ENCODE measurements at regions of chr1 and their contacts with region 1.

Region 1: DNA sequence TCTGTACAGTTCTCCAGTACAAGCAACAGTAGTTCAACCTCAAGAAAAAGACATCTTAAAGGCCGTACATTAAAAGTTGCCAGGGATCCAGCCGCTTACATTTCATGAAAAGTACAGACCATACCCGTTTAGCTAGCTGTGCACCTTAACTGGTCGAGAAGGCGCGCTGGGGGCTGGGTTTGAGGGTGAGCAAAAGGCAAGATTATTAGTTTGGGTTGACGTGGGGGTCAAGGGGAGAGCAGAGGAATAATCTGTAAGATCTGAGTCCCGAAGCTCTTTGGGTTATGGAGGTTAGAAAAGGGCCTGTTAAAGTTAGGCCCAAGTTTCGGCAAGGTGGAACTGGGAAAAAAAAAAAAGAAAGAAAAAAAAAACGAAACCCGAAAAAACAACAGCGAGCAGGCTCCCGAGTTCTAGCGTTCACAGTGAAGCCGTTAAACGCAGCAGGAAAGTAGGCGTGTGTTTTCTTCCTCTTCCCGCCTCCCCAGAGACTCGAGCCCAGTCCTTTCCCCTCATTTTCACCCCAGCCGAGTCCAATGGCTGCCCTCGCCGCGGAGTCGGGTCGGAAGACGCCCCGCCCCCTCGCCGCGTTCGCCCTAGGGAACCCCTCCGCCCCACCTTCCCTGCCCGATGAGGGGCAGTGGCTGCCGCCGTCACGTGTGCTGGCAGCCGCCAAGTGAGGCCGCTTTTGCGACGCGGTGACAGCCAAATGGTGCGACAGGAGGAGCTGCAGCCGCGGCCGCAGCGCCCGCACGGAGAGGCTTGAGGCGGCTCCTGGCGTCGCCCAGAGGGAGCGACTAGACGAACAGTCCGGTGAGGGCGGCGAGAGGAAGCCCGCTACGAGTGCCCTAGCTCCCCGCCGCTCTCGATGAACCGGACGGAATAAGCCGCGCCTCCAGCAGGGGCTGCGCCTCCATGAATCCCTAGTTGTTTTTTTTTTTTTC is at the start of gene PKN2:
- DNase-seq: peak; percentile 98
- H3K4me3 Mint-ChIP-seq: peak within 1 kb of the TSS; percentile 97
- H3K27ac Mint-ChIP-seq: peak within 1 kb of the TSS; percentile 93
- H3K4me1 Mint-ChIP-seq: peaks cover 31% of the 10 kb centered on the region
- H3K27me3 Mint-ChIP-seq: no peaks in the 10 kb centered on the region
- total RNA-seq, gene PKN2: 17.2 to 17.9 TPM

Region 2: GRCh38 chr1:86913896-86914634 is 1769.7 kb before region 1 on chr1 and contains the start of gene SELENOF:
- CTCF ChIA-PET with region 1: no interaction called
- intact Hi-C with region 1: loop called (anchors 1 kb)
- DNase-seq: peak; percentile 100
- H3K4me3 Mint-ChIP-seq: no peak within 1 kb of the TSS
- H3K27ac Mint-ChIP-seq: peak within 1 kb of the TSS; percentile 53
- H3K4me1 Mint-ChIP-seq: peaks cover 47% of the 10 kb centered on the region
- H3K27me3 Mint-ChIP-seq: no peaks in the 10 kb centered on the region
- total RNA-seq, gene SELENOF: 111 to 115 TPM

Region 3: GRCh38 chr1:88661951-88662699 is 21.7 kb before region 1 on chr1:
- CTCF ChIA-PET with region 1: interaction called, 26 read pairs
- intact Hi-C with region 1: loop called (anchors 1 kb)
- DNase-seq: no peak
- H3K4me3 Mint-ChIP-seq: no peak overlapping the region
- H3K27ac Mint-ChIP-seq: no peak overlapping the region
- H3K4me1 Mint-ChIP-seq: peaks cover 28% of the 10 kb centered on the region
- H3K27me3 Mint-ChIP-seq: no peaks in the 10 kb centered on the region

Region 4: GRCh38 chr1:88800382-88801051 is 116.7 kb after region 1 on chr1:
- CTCF ChIA-PET with region 1: interaction called, 3 read pairs
- intact Hi-C with region 1: loop called (anchors 1 kb)
- DNase-seq: peak; percentile 72
- H3K4me3 Mint-ChIP-seq: no peak overlapping the region
- H3K27ac Mint-ChIP-seq: peak overlapping the region; percentile 74
- H3K4me1 Mint-ChIP-seq: peaks cover 17% of the 10 kb centered on the region
- H3K27me3 Mint-ChIP-seq: no peaks in the 10 kb centered on the region

Region 5: GRCh38 chr1:88825721-88826120 is 141.9 kb after region 1 on chr1:
- CTCF ChIA-PET with region 1: no interaction called
- intact Hi-C with region 1: no loop called
- DNase-seq: no peak
- H3K4me3 Mint-ChIP-seq: no peak overlapping the region
- H3K27ac Mint-ChIP-seq: no peak overlapping the region
- H3K4me1 Mint-ChIP-seq: no peaks in the 10 kb centered on the region
- H3K27me3 Mint-ChIP-seq: no peaks in the 10 kb centered on the region

Region 6: DNA sequence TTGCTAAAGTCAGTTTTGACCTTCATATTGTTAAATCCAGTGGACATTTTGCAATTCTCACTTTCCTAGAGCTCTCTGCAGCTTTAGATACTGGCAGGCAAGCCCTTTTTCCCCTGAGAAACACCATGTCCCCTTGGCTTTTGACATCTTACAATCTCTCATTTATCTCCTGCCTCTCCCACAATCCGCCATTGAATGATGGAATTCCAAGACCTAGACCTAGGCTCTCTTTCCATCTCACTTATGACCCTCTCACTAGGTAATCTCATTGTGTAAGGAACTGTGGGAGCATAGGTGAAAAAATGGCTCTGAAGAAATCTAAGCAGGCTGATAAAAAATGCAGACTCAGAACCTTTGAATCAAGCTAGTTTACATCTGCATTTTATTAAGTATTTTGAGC is 306.6 kb after region 1 on chr1:
- CTCF ChIA-PET with region 1: no interaction called
- intact Hi-C with region 1: loop called (anchors 1 kb)
- DNase-seq: no peak
- H3K4me3 Mint-ChIP-seq: peak overlapping the region; percentile 10
- H3K27ac Mint-ChIP-seq: peak overlapping the region; percentile 10
- H3K4me1 Mint-ChIP-seq: peaks cover 45% of the 10 kb centered on the region
- H3K27me3 Mint-ChIP-seq: no peaks in the 10 kb centered on the region

Region 7: GRCh38 chr1:89994805-89995597 is 1311.2 kb after region 1 on chr1 and contains the start of gene ZNF326:
- CTCF ChIA-PET with region 1: no interaction called
- intact Hi-C with region 1: loop called (anchors 5 kb)
- DNase-seq: peak; percentile 94
- H3K4me3 Mint-ChIP-seq: peak within 1 kb of the TSS; percentile 96
- H3K27ac Mint-ChIP-seq: peak within 1 kb of the TSS; percentile 90
- H3K4me1 Mint-ChIP-seq: peaks cover 42% of the 10 kb centered on the region
- H3K27me3 Mint-ChIP-seq: no peaks in the 10 kb centered on the region
- total RNA-seq, gene ZNF326: 17.4 to 17.9 TPM